MCF 10A (cell line): ENCODE measurements at regions of chr15 and their contacts with region 1.

Region 1: DNA sequence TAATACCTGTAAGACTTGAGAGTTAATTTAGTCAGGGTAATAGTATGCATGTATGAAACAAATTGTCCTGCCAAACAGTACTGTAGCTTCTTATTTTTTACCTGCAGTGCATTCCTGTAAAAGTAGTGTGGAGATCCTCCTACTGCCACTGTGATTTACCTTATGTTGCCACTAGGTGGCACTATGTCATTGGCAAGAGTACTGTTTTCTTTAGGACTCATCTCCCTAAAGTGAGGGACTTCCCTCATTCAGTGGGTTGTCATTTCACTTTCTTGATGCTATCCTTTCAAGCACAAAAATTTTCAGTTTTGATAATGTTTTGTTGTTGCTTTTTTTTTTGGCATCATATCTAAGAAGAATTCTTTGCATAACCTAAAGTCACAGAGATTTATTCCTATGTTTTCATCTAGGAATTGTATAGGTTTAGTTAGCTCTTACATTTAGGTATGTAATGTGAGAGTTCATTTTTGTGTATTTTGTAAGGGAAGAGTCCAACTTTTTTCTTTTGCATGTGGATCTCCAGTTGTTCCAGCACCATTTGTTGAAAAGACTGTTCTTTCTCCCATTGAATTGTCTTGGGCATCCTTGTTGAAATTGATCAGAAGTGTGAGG is 105.7 kb downstream of the AKAP13 start:
- DNase-seq: peak; percentile 83
- H3K4me3 Mint-ChIP-seq: no peak overlapping the region
- H3K27ac Mint-ChIP-seq: no peak overlapping the region
- H3K4me1 Mint-ChIP-seq: peaks cover 37% of the 10 kb centered on the region
- H3K27me3 Mint-ChIP-seq: no peaks in the 10 kb centered on the region
- CTCF ChIP-seq: peak; percentile 62

Region 2: GRCh38 chr15:85361323-85361722 is 124.7 kb before region 1 on chr15:
- CTCF ChIA-PET with region 1: no interaction called
- POLR2A ChIA-PET with region 1: no interaction called
- intact Hi-C with region 1: no loop called
- DNase-seq: no peak
- H3K4me3 Mint-ChIP-seq: no peak overlapping the region
- H3K27ac Mint-ChIP-seq: no peak overlapping the region
- H3K4me1 Mint-ChIP-seq: peaks cover 26% of the 10 kb centered on the region
- H3K27me3 Mint-ChIP-seq: no peaks in the 10 kb centered on the region
- CTCF ChIP-seq: no peak

Region 3: DNA sequence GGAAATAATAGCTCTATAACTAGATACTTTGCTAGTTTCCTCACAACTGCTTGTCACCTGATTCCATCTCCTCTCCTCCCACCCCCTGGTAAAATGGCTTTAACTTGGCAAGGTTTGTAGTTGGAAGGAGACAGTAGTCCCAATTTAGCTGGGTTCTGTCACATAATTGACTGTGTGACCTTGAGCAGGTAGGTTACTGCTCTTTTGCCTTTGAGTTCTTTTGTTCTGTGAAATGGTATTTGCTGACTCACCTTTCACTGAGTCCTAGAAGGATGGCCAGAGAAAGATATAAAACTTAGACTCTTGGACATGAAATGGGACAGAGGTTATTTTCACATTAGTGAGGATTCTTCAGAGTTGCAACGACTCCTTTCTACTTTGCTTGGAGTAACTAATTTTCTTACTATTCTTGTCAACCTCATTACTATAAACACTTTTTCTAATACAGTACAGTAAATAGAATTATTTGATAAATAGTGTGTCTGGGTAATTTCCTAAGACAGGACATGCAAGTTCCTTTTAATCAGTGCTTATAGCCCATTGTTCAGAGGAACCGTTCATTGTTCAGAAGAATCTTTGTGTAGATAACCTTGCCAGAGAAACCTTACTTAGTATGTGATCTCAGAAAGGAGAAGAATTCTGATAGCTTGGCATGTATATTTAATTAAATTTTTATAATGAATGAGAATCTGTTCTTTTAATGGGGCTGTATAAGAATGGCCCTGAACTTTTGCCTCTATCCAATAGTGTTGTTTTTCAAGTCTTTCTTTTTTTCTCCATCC is 91.3 kb before region 1 on chr15:
- CTCF ChIA-PET with region 1: no interaction called
- POLR2A ChIA-PET with region 1: no interaction called
- intact Hi-C with region 1: no loop called
- DNase-seq: no peak
- H3K4me3 Mint-ChIP-seq: no peak overlapping the region
- H3K27ac Mint-ChIP-seq: no peak overlapping the region
- H3K4me1 Mint-ChIP-seq: peaks cover 26% of the 10 kb centered on the region
- H3K27me3 Mint-ChIP-seq: no peaks in the 10 kb centered on the region
- CTCF ChIP-seq: no peak

Region 4: GRCh38 chr15:85475317-85475701 is 10.8 kb before region 1 on chr15:
- CTCF ChIA-PET with region 1: interaction called, 22 read pairs
- POLR2A ChIA-PET with region 1: no interaction called
- intact Hi-C with region 1: no loop called
- DNase-seq: no peak
- H3K4me3 Mint-ChIP-seq: no peak overlapping the region
- H3K27ac Mint-ChIP-seq: peak overlapping the region; percentile 7
- H3K4me1 Mint-ChIP-seq: peaks cover 55% of the 10 kb centered on the region
- H3K27me3 Mint-ChIP-seq: no peaks in the 10 kb centered on the region
- CTCF ChIP-seq: no peak

Region 5: DNA sequence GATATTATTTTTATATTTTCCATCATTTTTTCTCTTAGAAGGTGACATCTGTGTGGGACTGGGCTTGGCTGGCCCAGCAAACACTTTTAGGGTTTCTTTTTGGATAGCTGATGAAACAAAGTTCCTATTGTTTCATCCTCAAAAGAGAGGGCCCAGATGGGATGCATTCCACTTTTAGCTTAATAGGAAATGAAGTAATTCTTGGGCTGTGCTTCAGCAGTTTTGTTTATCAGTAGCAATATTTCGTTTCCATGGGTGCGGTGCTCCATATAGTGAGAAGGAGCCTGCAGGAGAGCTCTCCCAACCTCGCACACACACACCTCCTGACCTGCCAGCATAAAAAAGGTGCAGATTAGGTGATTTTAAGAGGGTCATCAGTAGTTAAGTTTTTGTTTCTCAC is 41.8 kb after region 1 on chr15:
- CTCF ChIA-PET with region 1: no interaction called
- POLR2A ChIA-PET with region 1: no interaction called
- intact Hi-C with region 1: no loop called
- DNase-seq: no peak
- H3K4me3 Mint-ChIP-seq: no peak overlapping the region
- H3K27ac Mint-ChIP-seq: no peak overlapping the region
- H3K4me1 Mint-ChIP-seq: peaks cover 13% of the 10 kb centered on the region
- H3K27me3 Mint-ChIP-seq: no peaks in the 10 kb centered on the region
- CTCF ChIP-seq: no peak